ENCODE measurements at regions of chr10 and their contacts with region 1.

Region 1: GRCh38 chr10:43348511-43349312 is 22.7 kb upstream of the FXYD4 start:
- DNase-seq: peak; percentile 67 to 97 (median 93)
- H3K4me3 ChIP-seq: peak overlapping the region in 13 of 59 donors; percentile 1 to 64 (median 25)
- H3K27ac ChIP-seq: peak overlapping the region; percentile 49 to 96 (median 89)
- H3K27me3 ChIP-seq: no peaks in the 10 kb centered on the region
- CTCF ChIP-seq: peak; percentile 80 to 99 (median 96)

Region 2: DNA sequence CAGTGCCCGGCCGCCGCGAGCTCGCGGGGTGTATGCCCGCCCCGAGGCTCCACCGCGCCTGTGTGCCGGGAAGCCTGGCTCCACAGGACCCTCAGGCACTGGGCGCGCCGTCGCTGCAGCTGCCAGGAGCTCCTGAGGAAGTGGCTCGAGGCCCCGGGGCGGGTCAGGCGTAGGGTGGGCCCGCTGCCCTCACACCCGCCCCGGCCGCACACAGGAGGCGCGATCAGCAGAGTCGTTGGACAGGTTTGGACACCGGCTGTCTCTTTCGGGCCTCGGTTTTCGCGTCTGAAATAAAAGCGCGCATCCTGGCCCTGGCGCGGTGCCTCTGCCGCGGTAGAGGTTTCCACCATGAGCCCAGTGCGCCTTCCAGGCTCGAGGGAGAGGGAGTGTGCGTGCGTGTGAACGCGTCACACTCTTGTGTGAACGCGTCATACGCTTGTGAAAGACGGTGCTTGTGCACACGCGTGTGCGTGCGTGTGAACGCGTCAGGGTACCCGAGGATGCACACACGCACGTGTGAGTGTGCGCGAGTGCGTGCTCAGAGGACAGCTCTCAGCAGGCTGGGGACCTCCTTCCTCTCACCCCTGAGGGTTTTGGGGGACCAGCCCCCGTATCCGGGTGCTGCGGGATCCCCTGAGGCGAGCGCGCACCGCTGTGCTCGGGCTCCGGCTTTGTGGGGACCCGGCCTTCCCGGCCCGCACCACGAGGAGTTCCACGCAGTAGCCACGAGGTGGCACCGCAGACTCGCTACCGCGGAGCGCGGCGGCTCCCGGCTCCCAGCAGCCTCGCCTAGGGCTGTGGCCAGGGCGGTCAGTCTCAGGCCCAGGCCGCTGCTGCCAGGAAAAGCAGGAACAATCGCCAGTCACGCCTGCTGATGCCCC is 482.4 kb before region 1 on chr10:
- intact Hi-C with region 1: loop called in 1 of 2 experiments (anchors 10 kb)
- DNase-seq: peak; percentile 62 to 92 (median 75)
- H3K4me3 ChIP-seq: peak overlapping the region in 58 of 59 donors; percentile 13 to 66 (median 43)
- H3K27ac ChIP-seq: peak overlapping the region in 3 of 59 donors; percentile 9 to 49 (median 31)
- H3K27me3 ChIP-seq: peaks cover 0 to 17% (median 0%) of the 10 kb centered on the region in 45 donors
- CTCF ChIP-seq: peak; percentile 36 to 91 (median 77)

Region 3: GRCh38 chr10:43078987-43079275 is 269.8 kb before region 1 on chr10:
- intact Hi-C with region 1: no loop called
- DNase-seq: peak in 1 of 10 donors; percentile 46
- H3K4me3 ChIP-seq: no peak overlapping the region
- H3K27ac ChIP-seq: no peak overlapping the region
- H3K27me3 ChIP-seq: peaks cover 0 to 67% (median 38%) of the 10 kb centered on the region in 45 donors
- CTCF ChIP-seq: peak in 43 of 56 donors; percentile 15 to 52 (median 35)

Region 4: DNA sequence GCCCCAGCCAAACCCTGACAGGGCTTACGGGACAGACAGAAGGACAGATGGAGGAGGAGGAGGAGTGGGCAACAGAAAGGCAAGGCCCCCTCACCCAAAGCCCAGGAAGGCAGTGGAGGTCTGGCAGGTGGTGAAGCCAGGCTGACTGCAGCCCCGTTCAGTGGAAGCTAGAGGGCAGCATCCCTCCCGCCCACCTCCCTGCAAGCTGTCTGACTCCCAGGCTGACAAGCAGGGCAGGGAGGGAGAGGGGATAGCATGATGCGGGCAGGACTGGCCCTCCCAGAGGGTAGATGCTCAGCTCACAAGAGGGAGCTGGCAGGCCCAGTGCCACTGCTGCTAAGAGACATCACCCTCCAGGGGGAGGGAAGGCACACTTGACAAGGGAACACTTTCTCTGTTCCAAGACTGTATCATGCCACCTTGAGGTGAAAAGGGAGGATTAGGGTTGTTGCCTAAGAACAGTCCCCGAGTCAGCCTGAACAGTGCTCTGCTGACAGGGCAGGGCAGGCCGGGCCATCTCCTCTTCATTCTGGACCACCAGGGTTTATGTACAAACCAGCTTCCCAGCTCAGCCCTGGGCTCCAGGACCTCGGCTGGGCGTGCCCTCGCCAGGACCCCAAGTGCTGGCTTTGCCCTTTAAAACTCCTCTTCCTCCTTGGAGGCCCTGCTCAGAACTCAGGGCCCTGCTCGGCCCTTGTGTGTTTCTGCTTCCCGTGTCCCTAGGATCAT is 143.6 kb before region 1 on chr10:
- intact Hi-C with region 1: loop called (anchors 10 kb)
- DNase-seq: peak in 9 of 10 donors; percentile 28 to 70 (median 62)
- H3K4me3 ChIP-seq: no peak overlapping the region
- H3K27ac ChIP-seq: peak overlapping the region in 6 of 59 donors; percentile 7 to 52 (median 22)
- H3K27me3 ChIP-seq: no peaks in the 10 kb centered on the region
- CTCF ChIP-seq: peak in 55 of 56 donors; percentile 30 to 86 (median 73)

Region 5: DNA sequence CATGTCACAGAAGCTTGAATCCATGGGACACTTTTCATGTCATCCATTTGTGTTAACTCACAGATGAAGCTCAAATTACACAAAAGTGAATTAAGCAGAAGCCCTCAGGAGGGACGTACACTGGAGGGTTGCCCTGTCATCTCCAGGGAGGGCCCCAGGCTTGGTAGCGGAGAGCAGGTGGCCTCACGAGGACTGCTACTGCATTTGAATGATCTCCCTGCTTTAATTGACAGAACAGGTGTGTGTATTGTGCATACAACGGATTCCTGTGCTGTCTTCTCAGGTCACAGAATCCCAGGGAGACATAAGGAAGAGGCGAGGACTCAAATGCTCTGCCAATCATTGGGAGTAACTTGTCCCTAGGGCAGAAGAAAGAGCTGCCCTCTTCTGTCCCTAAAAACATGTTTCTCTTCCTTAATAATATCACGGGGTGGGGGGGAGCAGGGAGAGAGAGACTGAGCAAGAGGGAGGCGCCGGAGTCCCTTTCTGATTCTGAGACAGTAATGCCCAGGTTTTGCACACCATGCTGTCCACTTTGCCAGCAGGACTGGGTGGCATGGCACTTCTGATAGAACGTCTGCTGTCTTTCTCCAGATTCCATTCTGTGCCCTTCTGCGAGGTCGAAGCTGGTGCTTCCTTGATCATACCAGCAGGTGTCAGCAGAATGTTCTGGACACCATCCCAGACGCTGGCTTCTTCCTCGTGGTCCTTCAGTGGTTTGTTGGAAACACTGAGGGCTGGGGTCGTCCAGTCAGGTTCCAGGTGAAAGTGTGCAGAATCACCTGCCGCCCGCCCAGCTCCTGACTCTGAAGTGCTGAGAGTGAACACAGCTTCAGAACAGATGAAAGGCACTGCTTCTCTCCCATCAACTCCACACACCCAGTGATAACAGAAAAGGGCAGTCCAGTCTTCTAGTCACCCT is 55.7 kb before region 1 on chr10:
- intact Hi-C with region 1: loop called (anchors 1 to 5 kb)
- DNase-seq: peak in 9 of 10 donors; percentile 35 to 72 (median 68)
- H3K4me3 ChIP-seq: peak overlapping the region in 5 of 59 donors; percentile 4 to 26 (median 16)
- H3K27ac ChIP-seq: no peak overlapping the region
- H3K27me3 ChIP-seq: no peaks in the 10 kb centered on the region
- CTCF ChIP-seq: peak; percentile 27 to 87 (median 74)

Region 6: GRCh38 chr10:43390759-43391158 is 42.0 kb after region 1 on chr10:
- intact Hi-C with region 1: loop called (anchors 2 kb)
- DNase-seq: peak in 9 of 10 donors; percentile 16 to 79 (median 73)
- H3K4me3 ChIP-seq: peak overlapping the region in 2 of 59 donors; percentile 3 to 8
- H3K27ac ChIP-seq: peak overlapping the region in 51 of 59 donors; percentile 0 to 90 (median 70)
- H3K27me3 ChIP-seq: no peaks in the 10 kb centered on the region
- CTCF ChIP-seq: peak; percentile 27 to 88 (median 76)